Activated CD4-positive, alpha-beta T cell treated with anti-CD3 and anti-CD28 coated beads for 36 hours (primary cell): ENCODE measurements at regions of chr3 and their contacts with region 1.

Region 1: GRCh38 chr3:72523429-72524151 is 324.7 kb downstream of the SHQ1 start:
- DNase-seq: no peak
- ATAC-seq: no peak
- H3K4me3 Mint-ChIP-seq: no peak overlapping the region
- H3K27ac Mint-ChIP-seq: peak overlapping the region; percentile 55
- H3K4me1 Mint-ChIP-seq: peaks cover 45% of the 10 kb centered on the region
- H3K27me3 Mint-ChIP-seq: no peaks in the 10 kb centered on the region

Region 2: DNA sequence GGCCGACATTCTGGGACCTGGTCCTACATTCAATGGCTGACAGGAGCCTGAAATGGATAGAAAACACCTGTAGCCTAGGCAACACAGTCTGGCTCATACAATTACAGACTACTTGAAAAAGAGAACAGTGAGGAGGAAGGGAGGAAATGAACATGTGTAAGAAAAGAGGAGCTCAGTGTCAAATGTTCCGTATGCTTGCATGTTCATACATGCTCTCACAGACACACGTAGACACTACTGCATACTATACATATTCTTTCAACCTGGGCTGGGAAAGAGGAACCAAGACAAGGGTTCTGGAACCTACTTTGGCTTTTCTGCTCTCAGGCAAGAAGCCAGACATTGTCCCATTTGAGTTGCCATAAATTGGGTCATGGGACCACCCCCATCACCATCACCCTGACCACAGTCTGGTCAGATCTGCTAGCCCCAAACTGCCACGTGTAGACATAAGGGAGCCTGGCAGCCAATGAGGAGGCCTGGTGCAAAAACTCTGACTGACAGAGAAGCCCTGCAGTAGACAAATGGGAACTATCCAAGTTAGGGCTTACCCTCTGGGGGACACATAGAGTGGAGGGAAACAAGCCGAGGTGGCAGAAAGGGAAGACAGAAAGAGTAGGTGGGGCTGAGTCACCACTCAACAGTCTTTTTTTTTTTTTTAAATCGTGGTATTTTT is 14.6 kb after region 1 on chr3:
- CTCF ChIA-PET with region 1: interaction called, 3 read pairs
- POLR2A ChIA-PET with region 1: no interaction called
- intact Hi-C with region 1: loop called in 1 of 2 experiments (anchors 2 kb)
- DNase-seq: peak; percentile 27
- ATAC-seq: peak; percentile 74
- H3K4me3 Mint-ChIP-seq: no peak overlapping the region
- H3K27ac Mint-ChIP-seq: no peak overlapping the region
- H3K4me1 Mint-ChIP-seq: peaks cover 31% of the 10 kb centered on the region
- H3K27me3 Mint-ChIP-seq: peaks cover 13% of the 10 kb centered on the region

Region 3: DNA sequence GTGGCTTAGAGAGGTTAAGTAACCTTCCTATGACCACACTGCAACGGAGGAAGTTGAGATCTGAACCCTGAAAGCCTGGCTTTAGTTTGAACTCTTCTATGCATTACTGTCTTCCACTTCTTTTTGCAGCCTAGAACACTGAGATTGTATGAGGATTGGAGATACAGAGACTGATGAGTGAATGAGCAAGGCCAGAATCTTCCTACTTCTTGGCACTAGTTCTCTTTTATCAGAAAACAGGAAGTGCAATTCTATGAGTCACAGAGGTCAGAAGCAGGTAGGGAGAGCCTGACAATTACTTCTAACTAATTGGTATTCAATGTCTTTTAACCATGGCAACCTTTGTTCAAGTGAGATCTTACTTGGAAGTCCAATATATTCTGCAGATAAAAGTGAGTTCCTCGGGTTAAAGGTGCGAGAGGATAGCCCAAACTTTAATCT is 105.6 kb after region 1 on chr3:
- CTCF ChIA-PET with region 1: no interaction called
- POLR2A ChIA-PET with region 1: interaction called, 3 read pairs
- intact Hi-C with region 1: loop called (anchors 1 kb)
- DNase-seq: no peak
- ATAC-seq: peak; percentile 67
- H3K4me3 Mint-ChIP-seq: no peak overlapping the region
- H3K27ac Mint-ChIP-seq: peak overlapping the region; percentile 79
- H3K4me1 Mint-ChIP-seq: peaks cover 60% of the 10 kb centered on the region
- H3K27me3 Mint-ChIP-seq: no peaks in the 10 kb centered on the region

Region 4: DNA sequence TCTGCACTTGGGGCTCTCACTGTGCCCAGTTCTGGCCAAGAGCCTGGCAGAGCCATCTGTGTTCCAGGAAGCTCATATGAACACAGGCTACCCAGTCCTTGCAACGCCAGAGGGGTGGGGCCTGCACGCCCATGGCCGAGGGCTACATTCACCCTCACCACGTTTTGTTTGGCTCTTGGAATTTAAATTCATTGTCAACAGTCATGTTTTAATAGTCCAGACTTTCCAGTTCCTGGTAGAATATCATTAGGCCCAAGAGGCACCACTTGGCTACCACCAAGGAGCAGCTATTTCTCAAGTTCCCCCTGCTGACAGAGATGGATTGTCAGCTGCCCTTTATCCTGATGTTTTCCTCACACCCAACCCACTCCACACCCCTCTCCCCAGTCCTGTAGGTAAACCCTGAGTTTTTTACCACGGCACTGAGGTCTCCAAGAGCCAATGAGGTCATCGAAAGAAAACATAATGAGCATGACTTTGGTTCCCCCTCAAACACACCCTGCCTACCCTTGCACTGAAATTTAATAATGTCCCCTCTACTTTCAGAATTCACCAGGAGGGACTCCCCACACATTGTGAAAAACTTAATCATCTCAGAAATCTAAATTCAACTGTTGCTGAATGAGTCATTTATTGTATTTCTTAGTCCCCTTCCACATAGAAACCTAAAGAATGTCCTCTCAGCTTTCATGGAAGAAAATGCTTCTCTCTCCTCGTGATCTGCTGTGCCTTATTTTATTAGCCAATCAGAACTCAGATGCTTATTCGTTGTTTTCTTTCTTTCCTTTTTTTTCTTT is 199.5 kb after region 1 on chr3:
- CTCF ChIA-PET with region 1: no interaction called
- POLR2A ChIA-PET with region 1: no interaction called
- intact Hi-C with region 1: loop called in 1 of 2 experiments (anchors 5 kb)
- DNase-seq: peak; percentile 16
- ATAC-seq: peak; percentile 95
- H3K4me3 Mint-ChIP-seq: no peak overlapping the region
- H3K27ac Mint-ChIP-seq: peak overlapping the region; percentile 61
- H3K4me1 Mint-ChIP-seq: peaks cover 19% of the 10 kb centered on the region
- H3K27me3 Mint-ChIP-seq: peaks cover 5% of the 10 kb centered on the region